ENCODE measurements at regions of chr16 and their contacts with region 1.

Region 1: DNA sequence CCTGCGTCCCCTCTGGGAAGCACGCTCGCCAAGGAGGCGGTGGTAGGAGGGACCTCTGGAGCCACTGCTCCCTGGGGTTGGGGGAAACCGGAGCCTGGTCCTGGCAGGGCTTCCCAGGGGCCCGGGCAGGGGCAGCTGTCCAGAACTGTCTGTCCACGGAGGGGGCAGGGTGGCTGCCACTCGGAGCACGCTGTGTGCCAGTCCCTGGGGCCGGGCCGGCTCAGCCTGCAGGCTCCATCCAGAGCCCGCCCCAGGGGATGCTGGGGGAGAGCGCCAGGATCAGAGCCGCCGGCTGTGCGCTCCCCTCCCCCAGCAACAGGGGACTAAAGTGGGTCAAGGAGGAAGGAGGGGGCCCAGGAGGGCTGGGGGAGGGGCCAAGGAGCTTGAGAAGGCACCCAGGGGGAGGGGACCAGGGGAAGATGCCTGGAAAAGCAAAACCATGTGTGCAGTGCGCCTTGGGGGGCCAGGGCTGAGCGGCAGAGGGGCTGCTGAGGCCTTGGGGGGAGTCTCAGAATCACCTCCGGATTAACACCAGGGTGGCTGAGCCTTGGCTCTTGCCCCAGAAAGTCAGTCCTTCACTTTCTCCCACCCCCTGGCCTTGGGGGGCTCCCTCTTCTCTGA is 21.3 kb downstream of the ZNF423 start:
- DNase-seq: peak; percentile 83 to 95 (median 94)
- ATAC-seq: peak; percentile 65 to 75
- H3K4me3 ChIP-seq: no peak overlapping the region
- H3K27ac ChIP-seq: peak overlapping the region; percentile 84
- H3K4me1 ChIP-seq: peaks cover 38% of the 10 kb centered on the region
- H3K27me3 ChIP-seq: no peaks in the 10 kb centered on the region

Region 2: DNA sequence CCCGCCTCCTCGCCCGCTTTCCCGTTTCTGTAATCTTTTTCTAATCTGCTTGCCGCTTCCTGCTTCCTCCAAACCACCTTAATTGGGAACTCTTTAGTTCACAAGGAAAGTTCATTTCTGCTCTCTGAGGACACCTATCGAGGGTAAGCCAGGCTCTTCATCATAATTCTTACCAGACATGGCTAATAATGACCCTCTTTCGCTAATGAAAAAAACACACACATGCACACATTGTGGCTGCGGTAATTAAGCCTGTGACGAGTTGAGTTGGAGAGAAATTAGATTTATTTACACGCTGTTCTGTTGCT is 79.4 kb before region 1 on chr16:
- intact Hi-C with region 1: loop called in 1 of 4 experiments (anchors 10 kb)
- DNase-seq: no peak
- ATAC-seq: peak; percentile 65 to 67
- H3K4me3 ChIP-seq: peak overlapping the region; percentile 49
- H3K27ac ChIP-seq: no peak overlapping the region
- H3K4me1 ChIP-seq: peaks cover 2% of the 10 kb centered on the region
- H3K27me3 ChIP-seq: no peaks in the 10 kb centered on the region

Region 3: DNA sequence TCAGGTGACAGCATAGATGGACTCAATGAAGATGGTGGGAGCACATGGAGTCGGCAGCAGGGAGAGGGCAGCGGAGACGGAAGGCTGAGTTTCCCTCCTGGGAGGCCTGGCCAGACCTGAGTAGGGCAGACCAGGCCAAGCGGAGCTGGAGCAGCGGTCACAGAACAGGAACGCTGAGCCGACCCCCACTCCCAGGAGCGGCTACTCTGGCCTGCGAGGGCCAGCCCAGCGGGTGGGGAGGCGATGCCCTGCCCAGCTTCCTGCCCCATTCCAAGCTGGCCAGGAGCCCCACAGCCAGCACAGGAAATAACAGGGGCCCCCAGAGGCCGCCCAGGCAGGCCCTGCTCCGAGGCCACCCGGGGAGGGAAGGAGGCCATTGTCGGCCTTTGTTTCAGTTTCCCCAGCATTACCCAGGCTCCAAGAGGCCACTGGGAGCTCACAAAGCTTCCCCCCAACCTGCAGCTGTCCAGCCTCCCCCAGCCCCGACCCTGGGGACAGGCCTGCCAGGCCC is 58.5 kb before region 1 on chr16:
- intact Hi-C with region 1: no loop called
- DNase-seq: peak; percentile 69 to 86 (median 81)
- ATAC-seq: peak; percentile 81 to 87
- H3K4me3 ChIP-seq: no peak overlapping the region
- H3K27ac ChIP-seq: peak overlapping the region; percentile 65
- H3K4me1 ChIP-seq: peaks cover 19% of the 10 kb centered on the region
- H3K27me3 ChIP-seq: no peaks in the 10 kb centered on the region

Measured in right cardiac atrium (tissue), 5 donors.